H1 (cell line): ENCODE measurements at regions of chr2 and their contacts with region 1.

Region 1: GRCh38 chr2:42095923-42096408 is 48.1 kb downstream of the PKDCC start:
- DNase-seq: peak in 1 of 2 experiments; percentile 59
- H3K4me3 ChIP-seq: no peak overlapping the region
- H3K27ac ChIP-seq: no peak overlapping the region
- H3K4me1 ChIP-seq: peaks cover 0 to 9% (median 3%) of the 10 kb centered on the region in 4 experiments; a peak in 4 of 7 replicates
- H3K27me3 ChIP-seq: peaks cover 0 to 3% (median 1%) of the 10 kb centered on the region in 4 experiments; a peak in 2 of 7 replicates
- CTCF ChIP-seq: peak in 2 of 3 experiments; percentile 64 to 67; a peak in 3 of 4 replicates
- EP300 ChIP-seq: no peak
- POLR2A ChIP-seq: no peak
- RAD21 ChIP-seq: peak; percentile 76

Region 2: GRCh38 chr2:42053791-42054701 is 41.9 kb before region 1 on chr2:
- CTCF ChIA-PET with region 1: interaction called, 11 read pairs
- POLR2A ChIA-PET with region 1: no interaction called
- DNase-seq: no peak
- H3K4me3 ChIP-seq: no peak overlapping the region
- H3K27ac ChIP-seq: no peak overlapping the region
- H3K4me1 ChIP-seq: peaks cover 5 to 45% (median 36%) of the 10 kb centered on the region in 4 experiments
- H3K27me3 ChIP-seq: peaks cover 0 to 6% (median 4%) of the 10 kb centered on the region in 4 experiments; a peak in 5 of 7 replicates
- CTCF ChIP-seq: no peak
- EP300 ChIP-seq: no peak
- POLR2A ChIP-seq: no peak
- RAD21 ChIP-seq: no peak

Region 3: DNA sequence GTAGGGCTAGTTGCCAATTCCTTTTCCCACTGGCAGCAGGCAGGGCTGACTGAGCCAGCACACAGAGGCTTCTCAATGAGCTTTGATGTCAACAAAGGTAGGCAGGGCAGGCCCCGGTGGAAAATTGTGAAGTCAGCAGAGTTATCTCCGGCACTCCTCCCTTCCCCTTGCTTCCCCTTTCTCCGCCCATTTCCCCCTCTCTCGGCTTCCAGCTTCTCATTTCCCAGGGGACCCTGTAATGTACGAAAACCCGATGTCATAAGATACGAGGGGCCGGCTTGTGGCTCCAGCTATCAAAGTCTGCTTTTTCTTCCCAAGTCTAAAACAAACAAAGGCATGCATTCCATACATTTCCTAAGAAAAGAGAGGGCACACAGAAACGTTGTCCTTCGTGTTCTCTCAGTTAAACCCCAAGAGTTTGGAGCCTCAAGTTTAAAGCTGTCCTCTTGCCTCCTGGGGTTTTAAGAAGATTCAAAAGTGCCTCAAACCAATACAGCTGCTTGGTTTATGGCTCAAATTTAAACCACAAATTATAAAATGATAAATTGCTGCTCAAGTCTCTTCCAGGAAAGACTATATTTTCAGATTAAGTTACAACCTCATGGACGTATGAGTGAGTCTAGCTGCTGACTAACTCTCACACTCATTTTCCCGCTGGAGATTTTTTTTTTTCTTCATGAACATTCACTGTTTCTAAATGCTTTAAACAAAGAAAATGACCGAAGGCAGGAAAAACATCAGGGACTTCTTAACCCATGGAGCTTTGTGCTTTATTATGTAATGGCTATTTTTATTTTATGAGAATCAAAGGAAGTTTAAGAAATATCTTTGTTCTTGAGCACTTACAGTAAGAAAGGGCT is 46.0 kb after region 1 on chr2:
- CTCF ChIA-PET with region 1: interaction called, 14 read pairs
- POLR2A ChIA-PET with region 1: interaction called, 3 read pairs
- DNase-seq: no peak
- H3K4me3 ChIP-seq: peak overlapping the region; percentile 12 to 51 (median 34); a peak in 6 of 8 replicates
- H3K27ac ChIP-seq: peak overlapping the region; percentile 28; the same call in 1 of the 2 replicates
- H3K4me1 ChIP-seq: peaks cover 0 to 17% (median 6%) of the 10 kb centered on the region in 4 experiments; a peak in 5 of 7 replicates
- H3K27me3 ChIP-seq: no peaks in the 10 kb centered on the region
- CTCF ChIP-seq: no peak
- EP300 ChIP-seq: no peak
- POLR2A ChIP-seq: no peak
- RAD21 ChIP-seq: no peak

Region 4: DNA sequence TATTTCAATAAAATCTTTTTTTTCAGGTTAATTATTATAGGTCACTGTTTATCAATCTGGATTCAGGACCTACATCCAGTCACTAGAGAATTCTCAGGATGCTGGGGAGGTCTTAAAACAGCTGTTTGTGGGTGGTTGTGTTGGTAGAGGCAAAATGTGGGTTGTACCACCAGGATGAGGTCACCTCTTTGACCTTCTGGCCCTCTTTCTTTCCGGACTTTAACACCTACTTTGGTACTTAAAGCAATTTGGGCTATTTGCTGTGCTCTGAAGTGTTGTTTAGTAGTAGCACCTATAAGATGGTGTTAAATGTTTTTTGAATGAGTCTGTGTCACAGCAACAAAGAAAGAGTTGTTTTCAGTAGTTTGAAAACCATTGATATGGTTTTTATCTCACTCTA is 87.8 kb after region 1 on chr2:
- CTCF ChIA-PET with region 1: interaction called, 21 read pairs
- POLR2A ChIA-PET with region 1: no interaction called
- DNase-seq: no peak
- H3K4me3 ChIP-seq: no peak overlapping the region
- H3K27ac ChIP-seq: no peak overlapping the region
- H3K4me1 ChIP-seq: peaks cover 0 to 3% (median 0%) of the 10 kb centered on the region in 4 experiments; a peak in 1 of 7 replicates
- H3K27me3 ChIP-seq: no peaks in the 10 kb centered on the region
- CTCF ChIP-seq: no peak
- EP300 ChIP-seq: no peak
- POLR2A ChIP-seq: no peak
- RAD21 ChIP-seq: no peak

Region 5: DNA sequence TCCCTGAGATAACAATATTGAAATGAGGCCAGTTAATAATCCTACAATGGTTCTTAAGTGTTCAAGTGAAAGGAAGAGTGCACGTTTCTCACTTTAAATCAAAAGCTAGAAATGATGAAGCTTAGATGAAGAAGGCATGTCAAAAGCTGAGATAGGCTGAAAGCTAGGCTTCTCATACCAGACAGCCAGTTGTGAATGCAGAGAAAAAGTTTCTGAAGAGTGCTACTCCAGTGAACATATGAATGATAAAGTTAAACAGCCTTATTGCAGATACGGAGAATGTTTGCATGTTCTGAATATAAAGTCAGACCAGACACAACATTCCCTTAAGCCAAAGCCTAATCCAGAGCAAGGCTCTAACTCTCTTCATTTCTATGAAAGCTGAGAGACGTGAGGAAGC is 124.6 kb after region 1 on chr2:
- CTCF ChIA-PET with region 1: interaction called, 12 read pairs
- POLR2A ChIA-PET with region 1: no interaction called
- DNase-seq: no peak
- H3K4me3 ChIP-seq: no peak overlapping the region
- H3K27ac ChIP-seq: no peak overlapping the region
- H3K4me1 ChIP-seq: no peaks in the 10 kb centered on the region
- H3K27me3 ChIP-seq: no peaks in the 10 kb centered on the region
- CTCF ChIP-seq: no peak
- EP300 ChIP-seq: no peak
- POLR2A ChIP-seq: no peak
- RAD21 ChIP-seq: no peak

Region 6: GRCh38 chr2:42238644-42239288 is 142.8 kb after region 1 on chr2:
- CTCF ChIA-PET with region 1: interaction called, 96 read pairs
- POLR2A ChIA-PET with region 1: interaction called, 3 read pairs
- DNase-seq: peak; percentile 23 to 63
- H3K4me3 ChIP-seq: no peak overlapping the region
- H3K27ac ChIP-seq: no peak overlapping the region
- H3K4me1 ChIP-seq: peaks cover 0 to 6% (median 1%) of the 10 kb centered on the region in 4 experiments; a peak in 2 of 7 replicates
- H3K27me3 ChIP-seq: no peaks in the 10 kb centered on the region
- CTCF ChIP-seq: peak; percentile 61 to 75 (median 68)
- EP300 ChIP-seq: no peak
- POLR2A ChIP-seq: no peak
- RAD21 ChIP-seq: peak; percentile 83 to 85